ENCODE measurements at regions of chr15 and their contacts with region 1.

Region 1: DNA sequence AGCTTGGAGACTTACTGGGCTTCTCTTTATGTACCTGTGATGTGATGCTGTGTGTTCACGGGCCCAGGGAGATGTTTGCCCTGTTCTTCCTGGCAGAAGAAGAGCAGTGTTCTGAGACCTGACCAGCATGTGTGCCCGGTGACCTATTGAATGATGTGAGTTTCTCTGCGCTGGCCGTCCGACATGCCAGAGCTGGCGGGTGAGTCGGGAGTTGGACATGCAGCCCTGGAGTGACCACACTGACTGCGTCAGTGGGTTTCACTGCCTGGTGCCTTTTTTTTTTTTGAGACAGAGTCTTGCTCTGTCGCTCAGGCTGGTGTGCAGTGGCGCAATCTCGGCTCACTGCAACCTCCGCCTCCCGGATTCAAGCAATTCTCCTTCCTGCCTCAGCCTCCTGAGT is 42.4 kb downstream of the CGNL1 start:
- DNase-seq: no peak
- ATAC-seq: no peak

Region 2: GRCh38 chr15:57375827-57376695 is 42.6 kb before region 1 on chr15 and contains the start of gene CGNL1:
- intact Hi-C with region 1: loop called (anchors 5 kb)
- DNase-seq: peak; percentile 77
- ATAC-seq: peak; percentile 92
- total RNA-seq, gene CGNL1: 10.0 TPM